Activated naive CD4-positive, alpha-beta T cell treated with anti-CD3 and anti-CD28 coated beads, Interleukin-2, amount 10 ng/mL, durations not matched to agents 7 days and 5 days (primary cell): ENCODE measurements at regions of chr1 and their contacts with region 1.

Region 1: GRCh38 chr1:213054733-213055591 is 3.9 kb downstream of the RPS6KC1 start:
- DNase-seq: no peak
- H3K4me3 Mint-ChIP-seq: no peak overlapping the region
- H3K27ac Mint-ChIP-seq: no peak overlapping the region
- H3K4me1 Mint-ChIP-seq: peaks cover 24% of the 10 kb centered on the region
- H3K27me3 Mint-ChIP-seq: no peaks in the 10 kb centered on the region

Region 2: DNA sequence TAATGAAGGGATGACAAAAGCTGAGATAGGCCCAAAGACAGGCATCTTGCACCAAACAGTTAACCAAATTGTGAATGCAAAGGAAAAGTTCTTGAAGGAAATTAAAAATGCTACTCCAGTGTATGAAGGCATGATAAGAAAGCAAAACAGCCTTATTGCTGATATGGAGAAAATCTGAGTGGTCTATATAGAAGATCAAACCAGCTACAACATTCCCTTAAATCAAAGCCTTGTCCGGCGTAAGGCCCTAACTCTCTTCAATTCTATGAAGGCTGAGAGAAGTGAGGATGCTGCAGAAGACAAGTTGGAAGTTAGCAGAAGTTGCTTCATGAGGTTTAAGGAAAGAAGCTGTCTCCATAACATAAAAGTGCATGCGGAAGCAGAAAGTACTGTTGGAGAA is 34.9 kb before region 1 on chr1:
- CTCF ChIA-PET with region 1: no interaction called
- DNase-seq: no peak
- H3K4me3 Mint-ChIP-seq: no peak overlapping the region
- H3K27ac Mint-ChIP-seq: no peak overlapping the region
- H3K4me1 Mint-ChIP-seq: peaks cover 6% of the 10 kb centered on the region
- H3K27me3 Mint-ChIP-seq: peaks cover 11% of the 10 kb centered on the region

Region 3: GRCh38 chr1:213041443-213041842 is 13.5 kb before region 1 on chr1:
- CTCF ChIA-PET with region 1: no interaction called
- DNase-seq: no peak
- H3K4me3 Mint-ChIP-seq: no peak overlapping the region
- H3K27ac Mint-ChIP-seq: no peak overlapping the region
- H3K4me1 Mint-ChIP-seq: peaks cover 2% of the 10 kb centered on the region
- H3K27me3 Mint-ChIP-seq: peaks cover 25% of the 10 kb centered on the region

Region 4: GRCh38 chr1:213070406-213070805 is 15.4 kb after region 1 on chr1:
- CTCF ChIA-PET with region 1: interaction called, 10 read pairs
- DNase-seq: peak; percentile 43
- H3K4me3 Mint-ChIP-seq: no peak overlapping the region
- H3K27ac Mint-ChIP-seq: no peak overlapping the region
- H3K4me1 Mint-ChIP-seq: peaks cover 27% of the 10 kb centered on the region
- H3K27me3 Mint-ChIP-seq: no peaks in the 10 kb centered on the region